ENCODE measurements at regions of chr5 and their contacts with region 1.

Region 1: DNA sequence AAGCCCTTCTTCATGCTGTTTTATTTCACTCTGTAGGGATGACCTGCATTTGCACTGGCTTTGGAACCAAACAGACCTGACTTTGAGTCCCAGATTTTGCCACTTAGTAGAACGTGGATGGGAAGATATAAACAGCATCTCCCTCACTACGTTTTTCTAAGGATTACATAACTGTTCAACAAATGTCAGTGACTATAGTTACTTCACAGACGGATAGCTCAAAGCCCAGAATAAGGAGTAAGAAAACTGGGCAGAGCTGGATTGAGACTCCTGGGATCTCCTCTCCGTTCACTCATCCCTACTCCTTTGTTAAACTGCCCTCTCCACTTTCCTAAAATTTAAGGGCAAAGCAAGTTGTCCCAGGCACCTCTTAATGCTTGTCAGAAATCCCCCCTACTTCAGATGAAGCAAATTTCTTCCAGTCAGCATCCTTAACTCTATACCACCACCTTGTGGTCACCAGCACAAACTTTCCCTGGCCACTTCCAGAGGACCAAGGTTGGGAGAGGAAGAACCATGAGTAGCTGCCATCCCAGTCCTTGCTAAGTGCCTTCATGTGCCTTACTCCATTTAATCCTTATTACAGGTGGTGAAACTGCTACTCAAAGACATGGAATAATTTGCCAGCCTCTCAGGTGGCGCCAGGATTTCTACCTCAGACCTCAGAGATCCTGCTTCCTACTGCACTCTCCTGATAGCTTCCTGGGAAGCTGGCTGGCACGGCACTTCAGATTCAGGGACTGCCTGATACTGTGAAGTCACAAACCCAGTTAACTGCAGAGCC is 38.4 kb downstream of the EGR1 start:
- DNase-seq: no peak
- ATAC-seq: peak; percentile 87
- H3K4me3 ChIP-seq: no peak overlapping the region
- H3K27ac ChIP-seq: peak overlapping the region; percentile 6
- H3K4me1 ChIP-seq: peaks cover 13% of the 10 kb centered on the region
- H3K27me3 ChIP-seq: no peaks in the 10 kb centered on the region
- CTCF ChIP-seq: peak; percentile 74

Region 2: GRCh38 chr5:138449501-138450239 is 54.0 kb before region 1 on chr5:
- intact Hi-C with region 1: loop called (anchors 5 kb)
- DNase-seq: peak; percentile 93
- ATAC-seq: peak; percentile 97
- H3K4me3 ChIP-seq: no peak overlapping the region
- H3K27ac ChIP-seq: no peak overlapping the region
- H3K4me1 ChIP-seq: peaks cover 5% of the 10 kb centered on the region
- H3K27me3 ChIP-seq: no peaks in the 10 kb centered on the region
- CTCF ChIP-seq: peak; percentile 94

Measured in upper lobe of right lung (tissue), 1 donor.